T-cell (primary cell): ENCODE measurements at regions of chr12 and their contacts with region 1.

Region 1: GRCh38 chr12:122368361-122369073 is 54.0 kb downstream of the CLIP1 start:
- DNase-seq: no peak
- ATAC-seq: no peak
- H3K4me3 ChIP-seq: no peak overlapping the region
- H3K4me3 Mint-ChIP-seq: no peak overlapping the region
- H3K27ac ChIP-seq: no peak overlapping the region
- H3K27ac Mint-ChIP-seq: no peak overlapping the region
- H3K4me1 ChIP-seq: peaks cover 2 to 5% of the 10 kb centered on the region in 2 experiments
- H3K4me1 Mint-ChIP-seq: peaks cover 16 to 21% (median 19%) of the 10 kb centered on the region in 3 donors
- H3K27me3 ChIP-seq: no peaks in the 10 kb centered on the region
- H3K27me3 Mint-ChIP-seq: no peaks in the 10 kb centered on the region

Region 2: DNA sequence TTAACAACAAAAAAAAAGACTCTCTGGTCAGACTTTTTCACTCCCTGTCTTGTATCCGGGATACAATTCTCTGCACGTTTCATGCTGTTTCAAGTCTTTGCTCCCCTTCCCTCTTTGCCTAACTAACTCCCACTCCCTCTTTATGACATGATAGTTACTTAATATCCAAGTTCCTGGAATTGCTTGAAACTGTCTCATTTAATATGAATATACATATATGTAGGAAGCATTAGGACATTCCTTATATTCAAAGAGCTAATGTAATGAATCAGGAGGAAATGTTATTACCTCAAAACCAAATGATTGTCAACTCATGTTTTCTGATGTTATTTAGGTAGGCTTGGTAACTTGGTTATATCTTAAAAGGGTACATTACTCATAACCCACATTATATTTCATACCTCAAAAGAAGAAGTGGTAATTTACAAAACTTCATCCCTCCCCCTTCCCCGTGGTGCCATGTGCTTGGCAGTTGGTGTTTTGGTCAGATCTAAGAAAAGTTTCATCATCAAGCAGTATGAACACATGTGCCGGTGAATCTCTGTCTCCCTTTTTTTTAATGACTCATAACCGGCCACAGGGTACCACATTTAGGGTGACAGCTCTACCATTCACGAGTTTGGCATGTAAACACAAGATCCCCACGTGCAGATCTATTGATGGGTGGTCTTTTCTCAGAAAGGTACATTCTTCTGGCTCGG is 278.1 kb after region 1 on chr12:
- CTCF ChIA-PET with region 1: no interaction called
- POLR2A ChIA-PET with region 1: interaction called in 1 of 2 experiments, 15 read pairs
- DNase-seq: peak in 17 of 35 experiments; percentile 3 to 42 (median 11)
- ATAC-seq: peak; percentile 54 to 63 (median 60)
- H3K4me3 ChIP-seq: no peak overlapping the region
- H3K4me3 Mint-ChIP-seq: peak overlapping the region in 2 of 3 donors; percentile 17 to 46
- H3K27ac ChIP-seq: no peak overlapping the region
- H3K27ac Mint-ChIP-seq: no peak overlapping the region
- H3K4me1 ChIP-seq: peaks cover 0 to 3% of the 10 kb centered on the region in 2 experiments
- H3K4me1 Mint-ChIP-seq: peaks cover 6 to 13% (median 8%) of the 10 kb centered on the region in 3 donors
- H3K27me3 ChIP-seq: no peaks in the 10 kb centered on the region
- H3K27me3 Mint-ChIP-seq: no peaks in the 10 kb centered on the region